PC-9 (cell line): ENCODE measurements at regions of chr2 and their contacts with region 1.

Region 1: GRCh38 chr2:58633576-58634365 is 392.6 kb upstream of the FANCL start:
- DNase-seq: peak; percentile 5 to 81
- H3K4me3 ChIP-seq: no peak overlapping the region
- H3K27ac ChIP-seq: peak overlapping the region; percentile 97
- H3K4me1 ChIP-seq: peaks cover 40% of the 10 kb centered on the region
- H3K27me3 ChIP-seq: no peaks in the 10 kb centered on the region
- CTCF ChIP-seq: no peak

Region 2: GRCh38 chr2:58107803-58108710 is 525.7 kb before region 1 on chr2:
- CTCF ChIA-PET with region 1: no interaction called
- POLR2A ChIA-PET with region 1: no interaction called
- intact Hi-C with region 1: loop called (anchors 10 kb)
- DNase-seq: peak; percentile 53 to 98
- H3K4me3 ChIP-seq: peak overlapping the region; percentile 47
- H3K27ac ChIP-seq: peak overlapping the region; percentile 97
- H3K4me1 ChIP-seq: peaks cover 48% of the 10 kb centered on the region
- H3K27me3 ChIP-seq: no peaks in the 10 kb centered on the region
- CTCF ChIP-seq: no peak

Region 3: GRCh38 chr2:58620093-58620492 is 13.7 kb before region 1 on chr2:
- CTCF ChIA-PET with region 1: no interaction called
- POLR2A ChIA-PET with region 1: no interaction called
- intact Hi-C with region 1: loop called (anchors 1 kb)
- DNase-seq: peak; percentile 23 to 70
- H3K4me3 ChIP-seq: peak overlapping the region; percentile 12; the same call in 1 of the 2 replicates
- H3K27ac ChIP-seq: peak overlapping the region; percentile 65
- H3K4me1 ChIP-seq: peaks cover 30% of the 10 kb centered on the region
- H3K27me3 ChIP-seq: no peaks in the 10 kb centered on the region
- CTCF ChIP-seq: no peak

Region 4: GRCh38 chr2:58686776-58687175 is 53.0 kb after region 1 on chr2:
- CTCF ChIA-PET with region 1: no interaction called
- POLR2A ChIA-PET with region 1: interaction called, 14 read pairs
- intact Hi-C with region 1: no loop called
- DNase-seq: no peak
- H3K4me3 ChIP-seq: no peak overlapping the region
- H3K27ac ChIP-seq: no peak overlapping the region
- H3K4me1 ChIP-seq: no peaks in the 10 kb centered on the region
- H3K27me3 ChIP-seq: no peaks in the 10 kb centered on the region
- CTCF ChIP-seq: no peak

Region 5: DNA sequence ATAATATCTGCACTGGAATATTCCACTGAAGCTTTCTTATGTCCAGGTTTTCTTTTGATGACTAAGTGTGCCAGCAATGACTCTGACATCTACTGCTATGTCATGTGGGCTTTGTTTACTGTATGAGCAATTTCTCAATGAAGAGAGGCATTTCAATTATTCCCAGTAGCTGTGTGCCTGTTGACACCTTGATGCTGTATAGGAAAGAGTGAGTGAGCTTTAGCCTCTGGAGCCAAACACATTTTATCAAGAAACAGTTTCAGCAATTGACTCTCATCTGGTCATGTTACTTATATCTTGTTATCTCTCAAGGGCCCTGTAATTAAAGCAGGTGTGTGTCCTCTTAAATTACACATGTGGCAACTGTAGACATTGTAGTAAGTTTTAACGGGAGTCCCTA is 100.6 kb after region 1 on chr2:
- CTCF ChIA-PET with region 1: no interaction called
- POLR2A ChIA-PET with region 1: no interaction called
- intact Hi-C with region 1: loop called (anchors 5 kb)
- DNase-seq: peak; percentile 23 to 71
- H3K4me3 ChIP-seq: no peak overlapping the region
- H3K27ac ChIP-seq: no peak overlapping the region
- H3K4me1 ChIP-seq: 0 out of 2 replicates have a peak, but pooled peaks cover 4% of the 10 kb centered on the region
- H3K27me3 ChIP-seq: no peaks in the 10 kb centered on the region
- CTCF ChIP-seq: no peak